ENCODE measurements at regions of chr2 and their contacts with region 1.

Region 1: DNA sequence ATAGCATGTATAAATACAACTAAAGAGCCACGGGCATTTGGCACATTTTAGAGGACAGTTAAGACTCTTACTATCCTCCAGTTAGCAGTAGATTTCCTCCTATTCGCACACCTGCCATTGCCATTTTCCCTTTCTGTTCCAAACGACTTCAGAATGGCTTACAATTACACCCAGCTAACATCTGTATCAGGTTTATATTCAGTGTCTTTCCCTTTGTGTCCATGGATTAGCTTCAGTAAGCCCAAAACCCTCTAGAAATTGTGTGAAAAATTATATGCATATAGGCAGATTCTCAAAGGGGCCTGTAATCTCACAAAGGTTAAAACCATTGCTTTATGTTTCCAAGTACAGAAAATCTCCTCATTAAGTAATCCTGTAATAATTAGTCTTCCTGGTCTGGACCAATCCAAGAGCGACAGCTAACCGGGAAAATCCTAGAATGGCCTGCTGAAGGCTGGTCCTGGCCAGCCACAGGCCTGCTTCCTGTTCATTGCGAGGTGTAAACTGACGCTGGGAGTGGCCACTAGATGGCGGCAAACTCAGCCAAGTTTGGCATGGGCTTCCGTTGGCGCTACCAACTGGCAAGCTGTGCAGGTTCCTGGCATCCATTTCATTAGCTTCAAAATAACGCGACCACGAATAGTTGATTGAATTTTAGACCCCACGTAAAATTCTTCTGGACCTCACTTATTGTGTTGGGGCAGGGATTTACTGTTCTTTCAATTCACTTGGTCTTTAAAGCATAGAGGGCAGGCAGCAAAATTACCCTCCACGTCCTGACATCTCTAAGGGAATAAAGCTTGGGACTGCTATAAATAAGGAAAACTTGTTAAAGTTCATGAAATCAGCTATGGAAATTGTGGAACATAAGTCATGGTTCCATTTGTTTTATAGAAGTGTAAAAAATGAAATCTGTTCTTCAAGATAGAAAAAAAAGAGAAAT is 17.1 kb downstream of the ARHGAP25 start:
- DNase-seq: peak; percentile 69 to 95
- H3K4me3 ChIP-seq: no peak overlapping the region
- H3K27ac ChIP-seq: no peak overlapping the region
- H3K4me1 ChIP-seq: peaks cover 0 to 3% (median 0%) of the 10 kb centered on the region in 4 experiments; a peak in 1 of 7 replicates
- H3K27me3 ChIP-seq: no peaks in the 10 kb centered on the region
- CTCF ChIP-seq: peak; percentile 93 to 97 (median 96)
- EP300 ChIP-seq: 0 out of 3 replicates have a peak, but pooled peaks of 1 of the 2 experiments have one; percentile 14
- POLR2A ChIP-seq: no peak
- RAD21 ChIP-seq: peak; percentile 87 to 94

Region 2: DNA sequence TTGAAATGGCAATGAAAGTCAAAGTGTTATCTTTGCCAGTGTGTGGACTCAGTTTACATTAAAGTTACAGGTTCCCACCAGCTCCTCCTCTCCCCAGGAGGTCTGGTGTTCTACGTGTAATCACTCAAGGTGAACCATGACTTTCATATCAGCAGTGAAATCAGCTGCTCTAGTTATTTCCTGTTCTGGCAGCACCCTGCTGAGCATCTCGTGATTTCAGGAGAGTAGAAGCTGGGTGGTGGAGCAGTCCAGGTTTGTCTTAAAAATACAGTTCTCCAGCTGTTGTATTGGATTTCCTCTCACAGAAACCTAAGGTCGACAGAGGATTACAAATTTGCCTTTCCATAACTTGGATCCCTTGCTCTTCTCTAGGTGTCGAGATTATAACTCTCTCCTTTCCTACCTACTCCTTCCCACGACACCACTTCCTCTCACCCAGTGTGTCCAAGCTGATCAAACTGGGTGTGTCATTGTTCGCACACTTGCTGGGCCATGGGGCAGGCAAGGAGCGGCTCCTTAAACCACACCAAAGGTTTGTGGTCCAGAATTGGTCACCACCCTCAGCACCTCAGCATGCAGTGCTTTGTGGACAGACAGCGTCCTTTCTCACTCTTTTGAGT is 30.1 kb before region 1 on chr2:
- CTCF ChIA-PET with region 1: interaction called, 20 read pairs
- POLR2A ChIA-PET with region 1: no interaction called
- DNase-seq: no peak
- H3K4me3 ChIP-seq: no peak overlapping the region
- H3K27ac ChIP-seq: no peak overlapping the region
- H3K4me1 ChIP-seq: no peaks in the 10 kb centered on the region
- H3K27me3 ChIP-seq: no peaks in the 10 kb centered on the region
- CTCF ChIP-seq: no peak
- EP300 ChIP-seq: no peak
- POLR2A ChIP-seq: no peak
- RAD21 ChIP-seq: no peak

Region 3: GRCh38 chr2:68766376-68766845 is 14.7 kb after region 1 on chr2:
- CTCF ChIA-PET with region 1: interaction called, 22 read pairs
- POLR2A ChIA-PET with region 1: interaction called, 3 read pairs
- DNase-seq: no peak
- H3K4me3 ChIP-seq: no peak overlapping the region
- H3K27ac ChIP-seq: no peak overlapping the region
- H3K4me1 ChIP-seq: peaks cover 1 to 9% (median 6%) of the 10 kb centered on the region in 4 experiments; a peak in 4 of 7 replicates
- H3K27me3 ChIP-seq: no peaks in the 10 kb centered on the region
- CTCF ChIP-seq: no peak
- EP300 ChIP-seq: no peak
- POLR2A ChIP-seq: no peak
- RAD21 ChIP-seq: no peak

Region 4: DNA sequence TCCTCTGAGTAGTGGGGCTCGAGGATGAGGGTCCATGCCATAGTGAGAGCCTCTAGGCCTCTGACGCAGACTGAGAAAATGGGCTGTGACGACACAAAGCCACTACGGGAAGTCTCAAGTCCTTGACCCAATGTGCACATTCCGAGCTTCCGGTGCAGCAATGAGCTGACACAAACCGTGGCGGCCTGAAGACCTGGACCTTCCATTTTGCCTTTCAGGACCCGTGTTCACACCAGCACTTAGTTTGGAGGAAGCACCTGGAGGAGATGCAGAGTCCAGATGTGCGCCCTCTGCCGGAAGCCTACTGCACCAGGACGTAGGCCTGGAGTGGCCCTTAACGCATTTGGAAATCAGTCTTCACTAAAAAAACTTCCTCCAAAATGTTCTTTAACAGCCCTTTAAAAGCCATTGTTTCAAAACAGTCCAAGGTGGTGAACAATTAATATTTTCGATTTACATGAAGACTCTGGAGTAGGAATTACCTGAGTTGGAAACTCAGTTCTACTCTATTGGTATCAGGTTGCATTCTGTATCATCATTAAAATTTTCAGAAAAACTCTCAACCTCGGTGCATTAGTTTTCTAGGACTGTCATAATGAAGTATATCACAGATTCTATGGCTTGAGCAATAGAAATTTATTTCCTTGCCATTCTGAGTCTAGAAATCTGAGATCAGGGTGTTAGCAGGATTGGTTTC is 85.6 kb after region 1 on chr2:
- CTCF ChIA-PET with region 1: interaction called, 79 read pairs
- POLR2A ChIA-PET with region 1: no interaction called
- DNase-seq: peak; percentile 38 to 84
- H3K4me3 ChIP-seq: no peak overlapping the region
- H3K27ac ChIP-seq: no peak overlapping the region
- H3K4me1 ChIP-seq: no peaks in the 10 kb centered on the region
- H3K27me3 ChIP-seq: no peaks in the 10 kb centered on the region
- CTCF ChIP-seq: peak; percentile 78 to 91 (median 85)
- EP300 ChIP-seq: no peak
- POLR2A ChIP-seq: no peak
- RAD21 ChIP-seq: peak; percentile 62 to 75

Region 5: DNA sequence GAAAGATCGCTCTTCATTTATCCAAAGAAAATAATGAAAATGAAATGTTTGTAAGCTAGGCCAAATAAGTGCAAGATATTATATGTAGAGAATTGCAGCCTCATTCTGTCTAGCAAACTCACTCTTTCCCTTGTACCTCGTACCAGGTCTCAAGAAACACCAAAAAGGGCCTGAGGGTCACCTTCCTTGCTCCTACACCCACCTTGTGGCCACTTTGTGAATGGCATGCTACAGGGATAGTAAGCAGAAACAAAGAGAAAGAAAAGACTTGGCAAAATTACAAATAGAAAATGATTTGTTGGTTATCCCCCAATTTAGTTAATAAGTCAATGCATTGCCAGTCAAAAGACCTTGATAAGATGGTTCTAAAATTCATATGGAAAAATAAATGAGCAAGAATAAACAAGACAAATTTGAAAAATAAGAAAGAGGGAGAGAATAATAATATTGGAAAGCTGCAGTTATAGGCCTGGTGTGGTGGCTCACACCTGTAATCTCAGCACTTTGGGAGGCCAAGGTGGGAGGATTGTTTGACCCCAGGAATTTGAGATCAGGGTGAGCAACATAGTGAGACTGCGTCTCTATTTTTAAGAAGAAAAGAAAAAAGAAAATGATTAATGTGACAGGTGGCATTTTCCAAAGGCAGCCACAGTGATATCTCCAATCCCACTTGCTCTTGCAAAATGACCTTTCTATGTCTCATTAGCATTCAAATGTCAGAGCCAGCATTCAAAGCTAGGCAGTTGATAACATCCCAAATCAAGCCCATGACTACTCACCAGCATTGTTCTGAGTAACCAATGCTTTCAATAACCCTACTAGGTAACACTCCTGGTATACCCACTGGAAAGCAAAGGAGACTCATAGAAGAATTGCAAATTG is 158.4 kb after region 1 on chr2:
- CTCF ChIA-PET with region 1: interaction called, 13 read pairs
- POLR2A ChIA-PET with region 1: no interaction called
- DNase-seq: peak in 1 of 2 experiments; percentile 80
- H3K4me3 ChIP-seq: no peak overlapping the region
- H3K27ac ChIP-seq: no peak overlapping the region
- H3K4me1 ChIP-seq: peaks cover 0 to 7% (median 4%) of the 10 kb centered on the region in 4 experiments; a peak in 4 of 7 replicates
- H3K27me3 ChIP-seq: no peaks in the 10 kb centered on the region
- CTCF ChIP-seq: peak; percentile 54 to 77 (median 62)
- EP300 ChIP-seq: no peak
- POLR2A ChIP-seq: no peak
- RAD21 ChIP-seq: peak; percentile 77 to 78

Measured in H1 (cell line).